Activated B cell treated with CpG ODN at 0.5 μM for 24 hours (primary cell): ENCODE measurements at regions of chr1 and their contacts with region 1.

Region 1: DNA sequence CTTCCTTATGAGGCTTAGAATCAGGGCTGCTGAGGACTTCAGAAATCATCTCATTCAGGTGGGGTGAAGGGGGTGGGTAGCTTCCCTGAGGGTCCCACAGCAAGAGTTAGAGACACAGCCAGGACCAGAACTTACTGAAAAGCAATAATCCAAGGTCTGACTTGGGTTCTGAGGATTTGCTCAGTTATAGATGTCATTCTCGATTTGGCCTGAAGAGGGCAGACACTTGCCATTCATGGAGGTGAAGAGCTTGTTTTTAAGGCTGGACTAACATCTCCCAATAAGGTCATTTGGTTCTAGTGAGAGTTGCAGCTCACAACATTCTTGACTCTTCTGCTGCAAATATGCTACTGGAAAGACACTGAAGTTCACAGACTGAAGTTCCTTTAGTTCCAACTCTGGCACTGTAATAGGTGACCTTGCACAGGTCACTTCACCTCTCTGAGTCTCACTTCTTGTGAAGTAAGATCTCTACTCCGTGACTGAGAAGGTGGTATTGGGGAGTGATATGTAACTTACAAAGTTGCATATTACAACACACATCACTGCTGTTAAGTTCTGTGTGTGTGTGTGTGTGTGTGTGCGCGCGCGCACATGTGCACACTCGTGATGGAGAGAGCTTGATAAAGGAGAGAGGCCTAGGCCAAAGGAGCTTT is 69.8 kb upstream of the DIRAS3 start:
- DNase-seq: no peak
- ATAC-seq: no peak
- H3K4me3 Mint-ChIP-seq: no peak overlapping the region
- H3K27ac Mint-ChIP-seq: no peak overlapping the region
- H3K4me1 Mint-ChIP-seq: no peaks in the 10 kb centered on the region
- H3K27me3 Mint-ChIP-seq: no peaks in the 10 kb centered on the region
- CTCF ChIP-seq: peak; percentile 39

Region 2: DNA sequence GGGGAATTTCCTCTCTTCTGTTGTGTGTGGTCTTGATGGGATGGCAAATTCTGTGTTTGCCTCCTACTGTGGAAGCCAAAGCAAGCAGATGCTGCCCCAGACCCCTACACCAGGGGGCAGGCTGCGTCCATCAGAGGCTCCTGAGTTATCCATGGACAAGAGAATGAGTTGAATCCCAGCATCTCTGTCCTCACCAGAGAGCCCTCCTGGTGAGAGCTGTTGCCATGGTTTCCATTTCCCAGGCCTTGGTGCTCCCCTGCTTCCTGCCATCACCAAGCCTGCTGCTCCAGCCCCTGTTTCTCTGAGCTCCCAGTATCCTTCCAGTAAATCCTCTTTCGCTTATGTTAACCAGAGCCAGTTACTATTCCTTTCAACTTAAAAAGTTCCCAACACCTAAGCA is 266.6 kb before region 1 on chr1:
- CTCF ChIA-PET with region 1: no interaction called
- POLR2A ChIA-PET with region 1: no interaction called
- intact Hi-C with region 1: loop called (anchors 10 kb)
- DNase-seq: no peak
- ATAC-seq: no peak
- H3K4me3 Mint-ChIP-seq: no peak overlapping the region
- H3K27ac Mint-ChIP-seq: no peak overlapping the region
- H3K4me1 Mint-ChIP-seq: no peaks in the 10 kb centered on the region
- H3K27me3 Mint-ChIP-seq: peaks cover 16% of the 10 kb centered on the region
- CTCF ChIP-seq: no peak

Region 3: DNA sequence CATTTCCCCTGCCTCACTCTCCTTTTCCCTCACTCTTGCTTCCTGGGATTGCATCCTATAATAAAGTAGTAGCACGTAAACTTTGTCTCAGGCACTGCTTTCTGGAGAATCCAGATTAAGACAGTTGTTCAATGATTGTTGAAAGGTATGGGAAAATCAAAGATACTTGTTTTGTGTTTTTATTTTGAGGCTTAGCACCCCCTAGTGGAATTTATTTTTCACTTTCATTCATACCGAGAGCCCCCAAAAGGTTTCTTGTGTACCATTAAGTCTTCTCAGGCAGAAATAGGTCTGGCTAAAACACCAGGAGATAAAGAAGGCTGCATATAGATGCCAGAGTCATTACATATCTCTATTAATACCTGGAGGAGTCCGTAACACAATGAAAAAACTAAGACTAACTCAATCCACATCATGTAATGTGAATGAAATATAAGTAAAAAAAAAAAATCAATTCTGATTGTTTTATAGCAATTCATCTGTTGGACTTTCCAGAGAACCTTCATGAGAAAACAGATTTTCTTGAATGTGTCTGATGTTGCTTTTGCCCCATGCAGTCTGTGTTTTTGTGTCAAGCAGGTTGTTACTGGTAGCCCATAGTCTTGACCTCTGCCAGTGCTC is 226.0 kb after region 1 on chr1:
- CTCF ChIA-PET with region 1: interaction called, 8 read pairs
- POLR2A ChIA-PET with region 1: no interaction called
- intact Hi-C with region 1: loop called (anchors 2 kb)
- DNase-seq: no peak
- ATAC-seq: no peak
- H3K4me3 Mint-ChIP-seq: no peak overlapping the region
- H3K27ac Mint-ChIP-seq: peak overlapping the region; percentile 11
- H3K4me1 Mint-ChIP-seq: peaks cover 22% of the 10 kb centered on the region
- H3K27me3 Mint-ChIP-seq: no peaks in the 10 kb centered on the region
- CTCF ChIP-seq: no peak

Region 4: GRCh38 chr1:68590473-68590872 is 470.2 kb after region 1 on chr1:
- CTCF ChIA-PET with region 1: no interaction called
- POLR2A ChIA-PET with region 1: no interaction called
- intact Hi-C with region 1: loop called (anchors 5 kb)
- DNase-seq: no peak
- ATAC-seq: no peak
- H3K4me3 Mint-ChIP-seq: no peak overlapping the region
- H3K27ac Mint-ChIP-seq: no peak overlapping the region
- H3K4me1 Mint-ChIP-seq: no peaks in the 10 kb centered on the region
- H3K27me3 Mint-ChIP-seq: no peaks in the 10 kb centered on the region
- CTCF ChIP-seq: no peak